ENCODE measurements at regions of chr11 and their contacts with region 1.

Region 1: DNA sequence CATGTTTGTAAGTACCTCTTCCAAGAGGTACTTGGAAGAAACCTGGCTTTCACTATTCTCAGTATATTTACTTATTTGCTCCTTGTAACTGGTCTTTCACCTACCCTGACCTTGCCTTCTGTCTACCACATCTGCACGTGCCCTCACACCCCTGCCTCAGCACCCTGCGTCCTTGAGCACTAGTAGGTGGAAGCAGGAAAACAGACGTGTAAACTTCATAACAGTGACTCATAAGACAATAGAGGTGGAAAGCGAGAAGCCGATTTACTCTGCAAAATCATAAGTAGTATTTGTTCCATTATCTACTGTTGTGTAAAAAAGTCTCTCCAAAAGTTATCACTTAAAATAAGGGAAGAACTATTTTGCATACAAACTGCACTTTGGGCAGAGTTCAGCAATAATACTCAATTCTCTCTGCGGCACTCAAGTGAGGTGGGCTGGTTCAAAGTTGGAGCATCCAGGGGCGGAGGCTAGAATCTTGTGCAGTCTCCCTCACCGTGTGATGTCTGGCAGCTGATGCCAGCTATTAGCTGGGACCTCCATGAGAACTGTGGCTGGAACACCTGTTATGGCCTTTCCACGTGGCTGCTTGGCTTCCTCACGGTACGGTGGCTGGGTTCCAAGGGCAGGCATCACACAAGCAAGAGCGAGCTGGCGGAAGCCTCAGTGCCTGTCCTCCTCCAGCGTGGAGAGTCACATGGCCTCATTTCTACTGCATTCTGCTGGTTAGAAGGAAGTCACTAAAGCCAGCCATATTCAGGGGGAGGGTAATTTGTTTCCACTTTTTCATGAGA is 30.4 kb downstream of the PACS1 start:
- DNase-seq: peak; percentile 80
- H3K4me3 Mint-ChIP-seq: peak overlapping the region; percentile 72
- H3K27ac Mint-ChIP-seq: peak overlapping the region; percentile 92
- H3K4me1 Mint-ChIP-seq: peaks cover 63% of the 10 kb centered on the region
- H3K27me3 Mint-ChIP-seq: no peaks in the 10 kb centered on the region

Region 2: DNA sequence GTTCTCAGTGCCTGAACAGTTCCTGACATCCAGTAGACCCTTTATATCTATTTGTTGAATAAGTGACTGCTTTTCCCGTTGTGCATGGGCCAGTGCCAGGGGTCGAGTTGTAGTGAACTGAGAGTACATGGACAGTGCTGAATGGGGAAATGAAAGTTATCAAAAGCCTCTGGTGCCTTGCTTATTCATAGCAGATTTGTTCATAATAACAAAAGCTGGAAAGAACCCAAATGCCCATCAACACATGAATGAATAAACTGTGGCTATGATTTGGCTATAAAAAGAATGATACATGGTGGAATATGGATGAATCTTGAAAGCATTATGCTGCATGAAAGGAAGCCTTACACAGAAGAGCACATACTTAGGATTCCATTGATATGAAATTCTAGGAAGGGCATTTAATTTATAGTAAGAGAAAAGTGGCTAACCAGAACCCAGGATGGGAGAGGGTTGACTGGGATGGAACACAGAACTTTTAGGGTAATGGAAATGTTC is 12.2 kb after region 1 on chr11:
- CTCF ChIA-PET with region 1: interaction called, 5 read pairs
- intact Hi-C with region 1: loop called (anchors 2 kb)
- DNase-seq: no peak
- H3K4me3 Mint-ChIP-seq: no peak overlapping the region
- H3K27ac Mint-ChIP-seq: peak overlapping the region; percentile 88
- H3K4me1 Mint-ChIP-seq: peaks cover 95% of the 10 kb centered on the region
- H3K27me3 Mint-ChIP-seq: no peaks in the 10 kb centered on the region